Body of pancreas (tissue), 4 donors: ENCODE measurements at regions of chr16 and their contacts with region 1.

Region 1: DNA sequence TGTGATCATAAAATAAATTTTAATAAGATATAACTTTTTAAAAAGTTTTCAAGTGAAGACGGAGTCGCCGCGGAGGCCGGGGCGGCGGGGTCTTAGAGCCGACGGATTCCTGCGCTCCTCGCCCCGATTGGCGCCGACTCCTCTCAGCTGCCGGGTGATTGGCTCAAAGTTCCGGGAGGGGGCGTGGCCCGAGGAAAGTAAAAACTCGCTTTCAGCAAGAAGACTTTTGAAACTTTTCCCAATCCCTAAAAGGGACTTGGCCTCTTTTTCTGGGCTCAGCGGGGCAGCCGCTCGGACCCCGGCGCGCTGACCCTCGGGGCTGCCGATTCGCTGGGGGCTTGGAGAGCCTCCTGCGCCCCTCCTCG is at the start of gene FOXC2:
- DNase-seq: peak; percentile 63 to 77 (median 70)
- ATAC-seq: peak; percentile 51
- H3K4me3 ChIP-seq: no peak within 1 kb of the TSS
- H3K27ac ChIP-seq: no peak within 1 kb of the TSS
- H3K4me1 ChIP-seq: peaks cover 31% of the 10 kb centered on the region
- H3K27me3 ChIP-seq: peaks cover 0 to 64% of the 10 kb centered on the region in 2 donors
- CTCF ChIP-seq: no peak
- POLR2A ChIP-seq: no peak
- total RNA-seq, gene FOXC2: 0.66 to 0.78 TPM

Region 2: GRCh38 chr16:86798247-86799041 is 231.9 kb after region 1 on chr16:
- intact Hi-C with region 1: no loop called
- DNase-seq: no peak
- ATAC-seq: no peak
- H3K4me3 ChIP-seq: no peak overlapping the region
- H3K27ac ChIP-seq: no peak overlapping the region
- H3K4me1 ChIP-seq: no peaks in the 10 kb centered on the region
- H3K27me3 ChIP-seq: no peaks in the 10 kb centered on the region
- CTCF ChIP-seq: no peak
- POLR2A ChIP-seq: no peak

Region 3: GRCh38 chr16:87059994-87060986 is 493.7 kb after region 1 on chr16:
- intact Hi-C with region 1: loop called (anchors 5 kb)
- DNase-seq: no peak
- ATAC-seq: no peak
- H3K4me3 ChIP-seq: no peak overlapping the region
- H3K27ac ChIP-seq: no peak overlapping the region
- H3K4me1 ChIP-seq: peaks cover 10% of the 10 kb centered on the region
- H3K27me3 ChIP-seq: no peaks in the 10 kb centered on the region
- CTCF ChIP-seq: no peak
- POLR2A ChIP-seq: no peak

Region 4: DNA sequence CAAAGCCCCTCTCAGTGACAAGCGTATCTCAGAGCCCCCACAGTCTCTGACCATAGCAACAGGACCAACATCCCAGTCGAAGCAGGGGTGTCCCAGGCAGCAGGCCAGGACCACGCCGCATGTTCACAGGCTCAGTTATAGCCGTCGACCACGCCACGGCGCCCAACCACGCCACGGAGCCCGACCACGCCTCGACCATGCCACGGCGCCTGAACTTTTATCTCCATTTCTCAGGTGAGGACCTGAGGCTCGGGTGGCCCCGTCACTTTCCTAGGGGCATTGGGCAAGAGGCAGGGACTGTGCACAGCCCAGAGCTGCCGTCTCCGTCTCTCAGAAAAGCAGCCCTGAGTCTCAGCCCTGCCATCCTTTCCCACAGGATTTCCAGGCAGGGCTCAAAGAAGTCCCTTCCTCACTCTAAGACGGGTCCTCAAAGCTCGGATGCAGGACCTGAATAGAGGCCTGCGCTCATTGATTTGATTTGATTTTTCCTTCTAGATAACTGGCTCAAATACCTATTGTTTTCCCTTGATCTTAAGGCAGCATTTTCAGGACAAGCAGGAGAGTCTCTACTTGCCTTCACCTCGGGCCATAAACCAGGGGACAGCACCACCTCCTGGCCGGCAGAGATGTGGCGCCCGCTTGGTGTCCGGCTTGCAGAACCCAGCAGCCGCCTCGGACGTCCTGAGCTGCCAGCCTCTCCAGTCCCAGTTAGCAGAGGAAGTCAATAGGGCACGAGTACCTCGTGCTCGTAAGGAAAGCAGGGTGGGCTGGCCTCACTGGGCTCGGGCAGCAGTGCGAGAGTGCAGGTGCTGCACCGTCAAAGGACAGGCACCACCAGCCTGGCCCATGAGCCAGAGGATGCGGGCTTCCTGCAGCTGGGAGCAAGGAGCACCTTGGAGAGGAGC is 711.9 kb after region 1 on chr16:
- intact Hi-C with region 1: loop called (anchors 5 kb)
- DNase-seq: peak; percentile 77 to 85 (median 80)
- ATAC-seq: peak; percentile 90
- H3K4me3 ChIP-seq: no peak overlapping the region
- H3K27ac ChIP-seq: no peak overlapping the region
- H3K4me1 ChIP-seq: no peaks in the 10 kb centered on the region
- H3K27me3 ChIP-seq: no peaks in the 10 kb centered on the region
- CTCF ChIP-seq: peak; percentile 75 to 91 (median 84)
- POLR2A ChIP-seq: no peak